ENCODE measurements at regions of chr5 and their contacts with region 1.

Region 1: GRCh38 chr5:81425569-81425968 is 31.6 kb upstream of the ACOT12 start:
- DNase-seq: peak in 2 of 5 donors; percentile 38 to 49
- H3K4me3 ChIP-seq: no peak overlapping the region
- H3K4me3 Mint-ChIP-seq: no peak overlapping the region
- H3K27ac ChIP-seq: no peak overlapping the region
- H3K27ac Mint-ChIP-seq: no peak overlapping the region
- H3K4me1 ChIP-seq: no peaks in the 10 kb centered on the region
- H3K4me1 Mint-ChIP-seq: peaks cover 3 to 8% (median 5%) of the 10 kb centered on the region in 3 donors
- H3K27me3 ChIP-seq: no peaks in the 10 kb centered on the region
- H3K27me3 Mint-ChIP-seq: no peaks in the 10 kb centered on the region

Region 2: DNA sequence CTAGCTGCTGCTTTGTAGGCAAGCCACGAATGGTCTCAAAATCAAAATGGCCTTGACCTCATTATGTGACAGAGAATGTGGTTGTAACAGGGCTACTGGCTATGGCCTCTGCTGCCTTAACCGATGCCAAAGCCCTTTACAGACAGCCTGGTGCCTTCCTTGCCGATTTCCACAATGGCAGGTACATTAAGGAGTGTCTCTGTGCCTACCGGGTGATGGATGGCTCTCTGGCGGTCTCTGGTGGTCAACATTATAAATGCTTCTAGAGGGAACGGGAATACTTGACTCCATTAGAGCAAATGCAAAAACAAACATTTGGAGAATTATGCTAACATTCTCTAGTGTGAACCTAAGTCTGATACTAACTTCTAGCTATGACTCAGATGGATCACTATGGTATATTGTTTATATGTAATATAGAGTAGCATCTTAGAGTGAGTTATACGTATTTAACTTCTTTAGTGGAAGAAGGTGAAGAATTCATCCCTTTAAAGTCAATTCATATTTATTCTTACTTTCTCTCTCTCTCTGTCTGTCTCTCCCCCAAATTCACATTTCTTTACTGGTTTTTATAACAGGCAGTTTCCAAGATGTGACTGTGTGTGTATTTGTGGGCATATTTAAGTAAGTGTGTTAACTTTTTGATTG is 800.1 kb after region 1 on chr5:
- CTCF ChIA-PET with region 1: interaction called, 20 read pairs
- POLR2A ChIA-PET with region 1: no interaction called
- DNase-seq: peak; percentile 34 to 68 (median 50)
- H3K4me3 ChIP-seq: no peak overlapping the region
- H3K4me3 Mint-ChIP-seq: no peak overlapping the region
- H3K27ac ChIP-seq: no peak overlapping the region
- H3K27ac Mint-ChIP-seq: peak overlapping the region in 1 of 8 donors; percentile 77
- H3K4me1 ChIP-seq: no peaks in the 10 kb centered on the region
- H3K4me1 Mint-ChIP-seq: peaks cover 3 to 4% (median 4%) of the 10 kb centered on the region in 3 donors
- H3K27me3 ChIP-seq: no peaks in the 10 kb centered on the region
- H3K27me3 Mint-ChIP-seq: no peaks in the 10 kb centered on the region

Measured in CD8-positive, alpha-beta memory T cell (primary cell).